ENCODE measurements at regions of chrX and their contacts with region 1.

Region 1: GRCh38 chrX:1507511-1508463 is 29.2 kb downstream of the P2RY8 start:
- DNase-seq: no peak
- H3K4me3 Mint-ChIP-seq: no peak overlapping the region
- H3K27ac Mint-ChIP-seq: peak overlapping the region; percentile 59
- H3K4me1 Mint-ChIP-seq: peaks cover 12% of the 10 kb centered on the region
- H3K27me3 Mint-ChIP-seq: no peaks in the 10 kb centered on the region

Region 2: DNA sequence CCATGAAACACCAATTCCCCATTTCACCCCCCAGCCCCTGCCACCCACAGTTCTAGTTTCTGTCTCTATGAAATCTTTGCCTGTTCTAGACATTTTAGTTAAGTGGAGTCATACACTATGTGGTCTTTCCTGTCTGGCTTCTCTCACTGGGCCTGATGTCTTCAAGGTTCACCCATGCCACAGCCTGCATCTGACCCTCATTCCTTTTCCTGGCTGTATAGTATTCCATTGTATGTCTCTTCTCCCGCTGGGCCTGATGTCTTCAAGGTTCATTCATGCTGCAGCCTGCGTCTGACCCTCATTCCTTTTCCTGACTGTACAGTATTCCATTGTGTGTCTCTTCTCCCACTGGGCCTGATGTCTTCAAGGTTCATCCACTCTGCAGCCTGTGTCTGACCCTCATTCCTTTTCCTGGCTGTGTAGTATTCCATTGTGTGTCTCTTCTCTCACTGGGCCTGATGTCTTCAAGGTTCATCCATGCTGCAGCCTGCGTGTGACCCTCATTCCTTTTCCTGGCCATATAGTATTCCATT is 487.1 kb before region 1 on chrX:
- intact Hi-C with region 1: no loop called
- DNase-seq: no peak
- H3K4me3 Mint-ChIP-seq: no peak overlapping the region
- H3K27ac Mint-ChIP-seq: no peak overlapping the region
- H3K4me1 Mint-ChIP-seq: no peaks in the 10 kb centered on the region
- H3K27me3 Mint-ChIP-seq: no peaks in the 10 kb centered on the region

Region 3: DNA sequence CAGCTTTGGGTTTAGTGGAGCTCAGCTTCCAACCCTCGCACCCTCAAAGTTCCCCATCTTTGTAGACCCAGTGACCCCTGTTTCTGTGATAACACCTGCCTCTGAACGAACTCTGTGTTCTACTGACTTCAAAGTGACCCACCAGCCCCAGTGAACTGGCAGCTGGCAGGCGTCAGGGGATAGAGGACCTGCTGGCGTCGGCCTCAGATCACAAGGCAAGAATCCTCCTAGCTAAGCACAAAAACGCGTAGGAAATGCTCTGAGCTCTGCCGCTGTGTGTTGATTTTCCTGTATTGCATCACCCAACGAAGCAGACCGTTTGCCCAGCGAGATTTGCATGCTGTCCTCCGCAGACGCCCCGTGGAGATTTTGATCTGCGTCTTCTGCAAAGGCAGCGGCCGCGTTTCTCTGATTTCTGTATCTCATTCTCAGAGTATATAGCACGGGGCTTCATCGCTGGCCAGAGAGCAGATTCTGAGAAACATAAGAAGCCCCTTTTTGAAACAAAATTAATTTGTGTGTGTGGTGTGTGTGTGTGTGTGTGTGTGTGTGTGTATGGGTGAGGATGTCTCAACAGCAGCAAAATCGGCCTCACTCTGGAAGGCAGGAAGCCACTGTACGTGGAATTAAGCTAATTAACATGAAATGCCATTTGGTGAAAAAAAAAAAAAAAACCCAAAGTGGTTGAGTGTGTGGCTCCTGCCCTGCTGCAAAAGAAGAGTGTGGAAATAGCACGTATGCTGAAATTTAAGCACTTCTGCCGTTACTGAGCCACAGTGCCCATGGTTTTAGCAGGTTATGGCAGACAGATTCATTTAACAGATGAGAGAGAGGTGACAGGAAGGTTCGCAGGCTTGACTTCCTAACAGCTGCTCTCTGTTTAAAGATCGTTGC is 25.9 kb before region 1 on chrX:
- intact Hi-C with region 1: no loop called
- DNase-seq: peak; percentile 78
- H3K4me3 Mint-ChIP-seq: peak overlapping the region; percentile 85
- H3K27ac Mint-ChIP-seq: peak overlapping the region; percentile 99
- H3K4me1 Mint-ChIP-seq: peaks cover 66% of the 10 kb centered on the region
- H3K27me3 Mint-ChIP-seq: no peaks in the 10 kb centered on the region

Region 4: DNA sequence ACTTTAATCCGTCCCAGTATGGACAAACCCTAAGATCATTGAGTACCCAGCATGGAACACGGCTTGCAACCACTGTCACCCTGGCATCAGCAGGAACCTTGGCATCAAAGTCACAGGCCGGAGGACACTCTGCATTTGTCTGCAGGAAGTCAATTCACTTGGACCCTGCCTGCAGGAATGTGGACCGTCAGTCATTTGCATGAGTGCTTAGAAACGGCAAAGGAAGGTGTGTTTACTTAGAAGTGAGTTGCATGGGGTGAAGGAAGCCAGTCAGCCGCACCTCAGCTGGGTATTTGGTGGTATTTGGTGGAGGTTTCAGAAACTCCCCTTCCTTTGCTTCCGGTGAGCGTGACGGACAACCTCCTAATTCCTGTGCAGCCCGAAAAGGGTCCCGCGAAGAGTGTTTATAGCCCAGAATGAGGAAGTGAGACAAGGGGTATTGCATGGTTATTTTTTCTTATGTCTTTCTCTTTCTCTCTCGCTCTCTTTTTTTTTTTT is 13.7 kb after region 1 on chrX:
- intact Hi-C with region 1: loop called (anchors 1 kb)
- DNase-seq: peak; percentile 66
- H3K4me3 Mint-ChIP-seq: peak overlapping the region; percentile 71
- H3K27ac Mint-ChIP-seq: peak overlapping the region; percentile 81
- H3K4me1 Mint-ChIP-seq: peaks cover 55% of the 10 kb centered on the region
- H3K27me3 Mint-ChIP-seq: no peaks in the 10 kb centered on the region